Naive thymus-derived CD4-positive, alpha-beta T cell (primary cell): ENCODE measurements at regions of chr10 and their contacts with region 1.

Region 1: DNA sequence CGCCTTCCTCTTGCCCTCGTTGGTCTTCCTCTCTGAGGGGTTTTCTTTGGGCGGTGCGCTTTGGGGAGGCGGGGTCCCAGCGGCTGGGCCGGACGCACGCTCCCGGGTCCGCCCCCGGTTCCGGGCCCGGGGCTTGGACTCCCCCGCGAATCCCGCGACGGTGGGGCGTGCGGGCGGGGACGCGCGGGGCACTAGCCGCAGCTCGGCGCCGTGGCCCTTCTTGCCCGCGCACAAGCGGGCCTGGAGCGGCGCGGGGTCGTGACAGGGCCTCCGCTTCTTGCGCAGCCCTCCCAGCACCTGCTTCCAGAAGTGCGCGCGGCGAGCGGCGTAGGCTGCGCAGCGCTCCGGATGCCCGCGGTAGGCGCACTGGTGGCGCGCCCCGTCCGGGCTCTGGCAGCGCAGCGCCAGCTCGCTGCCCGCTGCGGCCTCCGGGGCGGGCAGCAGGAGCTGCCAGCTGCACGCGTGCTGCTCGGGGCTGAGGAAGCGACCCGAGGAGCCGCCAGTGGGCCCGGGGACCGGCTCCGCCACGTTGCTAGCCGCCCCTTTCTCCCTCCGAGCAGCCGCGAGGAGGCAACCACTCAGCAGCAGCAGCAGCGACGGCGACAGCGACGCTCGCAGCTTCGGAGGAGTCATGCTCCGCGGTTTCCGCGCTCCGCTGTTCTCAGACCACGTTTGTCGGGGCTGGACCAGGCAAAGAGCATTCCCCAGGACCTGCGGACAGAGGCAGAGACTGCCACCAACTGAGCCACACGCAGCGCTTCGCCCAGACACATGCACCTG is 759 bp downstream of the FGFBP3 start:
- DNase-seq: peak; percentile 51 to 79 (median 74)
- ATAC-seq: peak; percentile 91
- H3K4me3 ChIP-seq: peak overlapping the region; percentile 77
- H3K4me3 Mint-ChIP-seq: peak overlapping the region; percentile 85 to 96 (median 93)
- H3K27ac ChIP-seq: peak overlapping the region; percentile 65
- H3K27ac Mint-ChIP-seq: peak overlapping the region; percentile 73 to 92 (median 88)
- H3K4me1 ChIP-seq: peaks cover 0 to 10% of the 10 kb centered on the region in 2 donors
- H3K4me1 Mint-ChIP-seq: peaks cover 18 to 36% (median 28%) of the 10 kb centered on the region in 7 donors
- H3K27me3 ChIP-seq: no peaks in the 10 kb centered on the region
- H3K27me3 Mint-ChIP-seq: peaks cover 0 to 13% (median 0%) of the 10 kb centered on the region in 5 donors

Region 2: GRCh38 chr10:90871766-90872647 is 1036.5 kb before region 1 on chr10 and contains the start of gene RPP30:
- CTCF ChIA-PET with region 1: no interaction called
- POLR2A ChIA-PET with region 1: no interaction called
- intact Hi-C with region 1: loop called in 1 of 2 experiments (anchors 5 kb)
- DNase-seq: peak; percentile 71 to 83 (median 77)
- ATAC-seq: peak; percentile 99
- H3K4me3 ChIP-seq: peak within 1 kb of the TSS; percentile 83
- H3K4me3 Mint-ChIP-seq: peak within 1 kb of the TSS; percentile 94 to 99 (median 98)
- H3K27ac ChIP-seq: peak within 1 kb of the TSS; percentile 71
- H3K27ac Mint-ChIP-seq: peak within 1 kb of the TSS; percentile 73 to 95 (median 88)
- H3K4me1 ChIP-seq: peaks cover 14 to 23% of the 10 kb centered on the region in 2 donors
- H3K4me1 Mint-ChIP-seq: peaks cover 24 to 53% (median 37%) of the 10 kb centered on the region in 7 donors
- H3K27me3 ChIP-seq: no peaks in the 10 kb centered on the region
- H3K27me3 Mint-ChIP-seq: peaks cover 22 to 40% (median 34%) of the 10 kb centered on the region in 5 donors
- total RNA-seq, gene RPP30: 24.1 to 45.6 (median 38.0) TPM

Region 3: DNA sequence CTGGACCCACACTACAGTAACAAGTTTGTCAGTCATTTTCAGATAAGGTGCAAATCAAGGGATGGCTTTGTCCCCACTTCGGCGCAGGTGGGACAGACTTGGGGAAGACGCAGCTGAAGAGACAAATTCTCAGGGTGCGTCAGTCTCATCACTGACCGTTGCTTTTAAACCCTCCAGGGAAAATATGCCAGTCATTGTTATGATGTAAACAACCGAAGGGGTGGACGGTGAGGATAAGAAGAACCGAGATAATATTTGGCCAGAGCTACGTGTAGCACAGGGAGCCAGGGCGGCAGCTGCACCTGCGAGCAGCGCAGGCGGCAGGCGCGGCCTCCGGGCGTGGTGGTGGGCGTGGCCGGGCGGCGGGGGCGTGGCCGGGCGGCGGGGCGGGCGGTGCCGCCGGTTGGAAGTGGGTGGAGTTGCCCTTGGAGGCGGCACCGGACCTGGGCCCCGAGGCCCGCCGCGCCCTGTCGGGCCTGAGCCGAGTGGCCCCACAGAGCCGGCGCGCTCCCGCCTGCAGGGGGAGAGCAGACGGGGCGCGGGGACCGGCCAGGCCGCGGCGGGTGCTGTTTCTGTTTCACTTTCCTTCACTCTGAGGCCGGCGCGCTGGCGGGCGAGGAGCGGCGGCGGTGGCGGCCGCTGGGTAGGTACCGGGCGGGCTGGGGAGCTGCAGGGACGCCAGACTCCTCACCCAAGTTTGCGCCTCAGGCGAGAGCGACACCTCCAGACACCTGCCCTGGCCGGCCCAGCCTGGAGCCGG is 688.2 kb before region 1 on chr10 and contains the start of gene PCGF5:
- CTCF ChIA-PET with region 1: no interaction called
- POLR2A ChIA-PET with region 1: no interaction called
- intact Hi-C with region 1: loop called in 1 of 2 experiments (anchors 2 kb)
- DNase-seq: peak; percentile 82 to 98 (median 90)
- ATAC-seq: peak; percentile 98
- H3K4me3 ChIP-seq: peak within 1 kb of the TSS; percentile 68
- H3K4me3 Mint-ChIP-seq: peak within 1 kb of the TSS; percentile 84 to 96 (median 90)
- H3K27ac ChIP-seq: peak within 1 kb of the TSS; percentile 90
- H3K27ac Mint-ChIP-seq: peak within 1 kb of the TSS; percentile 76 to 95 (median 89)
- H3K4me1 ChIP-seq: peaks cover 28 to 34% of the 10 kb centered on the region in 2 donors
- H3K4me1 Mint-ChIP-seq: peaks cover 33 to 69% (median 55%) of the 10 kb centered on the region in 7 donors
- H3K27me3 ChIP-seq: no peaks in the 10 kb centered on the region
- H3K27me3 Mint-ChIP-seq: no peaks in the 10 kb centered on the region
- total RNA-seq, gene PCGF5: 41.2 to 62.3 (median 57.4) TPM

Region 4: DNA sequence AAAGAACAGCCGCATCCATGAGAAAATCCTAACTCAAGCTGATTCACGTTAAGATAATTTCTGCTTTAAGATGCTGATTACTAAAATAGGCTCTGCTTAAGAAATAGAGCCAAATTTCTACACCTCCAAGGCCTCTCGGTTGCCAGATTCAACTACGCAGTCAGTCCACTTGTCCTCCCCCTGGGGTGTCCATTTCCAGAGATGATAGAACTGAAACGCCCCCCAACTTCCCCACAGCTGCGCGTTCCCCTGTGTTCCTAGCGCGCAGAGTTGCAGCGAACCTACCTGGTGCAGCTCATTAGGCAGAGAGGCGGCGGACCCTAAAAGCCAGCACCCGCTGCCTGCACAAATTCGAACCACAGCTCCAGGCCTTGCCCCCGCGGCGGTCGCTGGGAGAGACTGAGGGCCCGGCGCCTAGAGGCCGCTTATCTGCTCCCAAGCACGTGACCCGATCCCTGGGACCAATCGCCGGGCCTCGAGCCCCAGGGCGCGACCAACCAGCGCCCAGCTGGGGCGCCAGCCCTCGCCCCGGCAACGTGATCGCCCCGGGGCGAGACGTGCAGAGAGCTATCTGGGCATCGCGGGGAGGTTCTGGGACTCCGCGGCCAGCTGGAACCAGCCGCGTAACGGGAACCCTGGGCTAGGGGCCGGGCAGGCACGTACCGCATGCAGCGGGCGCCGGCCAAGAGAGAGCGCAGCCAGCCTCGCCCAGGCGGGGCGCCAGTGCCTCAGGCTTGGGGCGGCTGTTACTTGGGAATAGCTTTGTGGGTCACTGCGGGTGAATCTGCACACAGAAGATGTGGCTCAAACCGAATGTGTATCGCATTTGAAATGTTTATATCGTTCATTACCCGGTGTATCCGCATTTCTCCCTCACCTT is 275.6 kb before region 1 on chr10 and contains the start of gene PPP1R3C:
- CTCF ChIA-PET with region 1: no interaction called
- POLR2A ChIA-PET with region 1: no interaction called
- intact Hi-C with region 1: loop called (anchors 1 to 2 kb)
- DNase-seq: peak; percentile 5 to 60 (median 17)
- ATAC-seq: peak; percentile 65
- H3K4me3 ChIP-seq: peak within 1 kb of the TSS; percentile 33
- H3K4me3 Mint-ChIP-seq: peak within 1 kb of the TSS; percentile 68 to 76 (median 73)
- H3K27ac ChIP-seq: no peak within 1 kb of the TSS
- H3K27ac Mint-ChIP-seq: peak within 1 kb of the TSS in 1 of 9 donors; percentile 7
- H3K4me1 ChIP-seq: peaks cover 0 to 5% of the 10 kb centered on the region in 2 donors
- H3K4me1 Mint-ChIP-seq: peaks cover 0 to 15% (median 7%) of the 10 kb centered on the region in 7 donors
- H3K27me3 ChIP-seq: peaks cover 0 to 14% of the 10 kb centered on the region in 2 donors
- H3K27me3 Mint-ChIP-seq: peaks cover 61 to 74% (median 64%) of the 10 kb centered on the region in 5 donors
- total RNA-seq, gene PPP1R3C: 0.15 TPM in 1 of 5 experiments, not detected in the others

Region 5: GRCh38 chr10:91856637-91857036 is 51.9 kb before region 1 on chr10:
- CTCF ChIA-PET with region 1: interaction called, 10 read pairs
- POLR2A ChIA-PET with region 1: interaction called, 3 read pairs
- intact Hi-C with region 1: loop called (anchors 1 to 2 kb)
- DNase-seq: no peak
- ATAC-seq: no peak
- H3K4me3 ChIP-seq: no peak overlapping the region
- H3K4me3 Mint-ChIP-seq: no peak overlapping the region
- H3K27ac ChIP-seq: no peak overlapping the region
- H3K27ac Mint-ChIP-seq: peak overlapping the region in 1 of 9 donors; percentile 7
- H3K4me1 ChIP-seq: no peaks in the 10 kb centered on the region
- H3K4me1 Mint-ChIP-seq: peaks cover 0 to 2% (median 0%) of the 10 kb centered on the region in 7 donors
- H3K27me3 ChIP-seq: no peaks in the 10 kb centered on the region
- H3K27me3 Mint-ChIP-seq: no peaks in the 10 kb centered on the region

Region 6: GRCh38 chr10:92342796-92343195 is 434.3 kb after region 1 on chr10:
- CTCF ChIA-PET with region 1: no interaction called
- POLR2A ChIA-PET with region 1: no interaction called
- intact Hi-C with region 1: no loop called
- DNase-seq: no peak
- ATAC-seq: no peak
- H3K4me3 ChIP-seq: no peak overlapping the region
- H3K4me3 Mint-ChIP-seq: no peak overlapping the region
- H3K27ac ChIP-seq: no peak overlapping the region
- H3K27ac Mint-ChIP-seq: peak overlapping the region in 3 of 9 donors; percentile 2 to 51 (median 42)
- H3K4me1 ChIP-seq: no peaks in the 10 kb centered on the region
- H3K4me1 Mint-ChIP-seq: peaks cover 0 to 14% (median 4%) of the 10 kb centered on the region in 7 donors
- H3K27me3 ChIP-seq: no peaks in the 10 kb centered on the region
- H3K27me3 Mint-ChIP-seq: no peaks in the 10 kb centered on the region

Region 7: DNA sequence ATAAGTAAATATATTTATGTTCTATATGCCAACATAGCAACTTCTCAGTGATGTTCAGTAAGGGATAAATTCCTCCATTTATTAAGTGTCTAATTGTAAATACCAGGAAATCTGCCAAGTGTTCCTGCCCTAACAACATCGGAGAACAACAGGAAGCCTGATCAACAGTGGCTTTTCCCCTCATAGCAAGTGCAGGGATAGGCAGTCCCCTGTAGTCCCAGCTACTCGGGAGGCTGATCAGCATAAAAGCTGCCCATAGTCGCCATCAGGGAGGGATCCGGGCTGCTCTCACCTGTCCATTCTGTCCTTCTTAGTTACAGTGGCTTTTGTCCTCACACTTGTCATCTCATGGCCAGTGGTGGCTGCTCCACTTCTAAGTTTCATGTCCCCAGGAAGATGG is 524.1 kb after region 1 on chr10:
- CTCF ChIA-PET with region 1: no interaction called
- POLR2A ChIA-PET with region 1: no interaction called
- intact Hi-C with region 1: loop called in 1 of 2 experiments (anchors 1 kb)
- DNase-seq: no peak
- ATAC-seq: no peak
- H3K4me3 ChIP-seq: no peak overlapping the region
- H3K4me3 Mint-ChIP-seq: no peak overlapping the region
- H3K27ac ChIP-seq: no peak overlapping the region
- H3K27ac Mint-ChIP-seq: no peak overlapping the region
- H3K4me1 ChIP-seq: no peaks in the 10 kb centered on the region
- H3K4me1 Mint-ChIP-seq: no peaks in the 10 kb centered on the region
- H3K27me3 ChIP-seq: no peaks in the 10 kb centered on the region
- H3K27me3 Mint-ChIP-seq: no peaks in the 10 kb centered on the region